Posterior vena cava (tissue), 2 donors: ENCODE measurements at regions of chrX and their contacts with region 1.

Region 1: DNA sequence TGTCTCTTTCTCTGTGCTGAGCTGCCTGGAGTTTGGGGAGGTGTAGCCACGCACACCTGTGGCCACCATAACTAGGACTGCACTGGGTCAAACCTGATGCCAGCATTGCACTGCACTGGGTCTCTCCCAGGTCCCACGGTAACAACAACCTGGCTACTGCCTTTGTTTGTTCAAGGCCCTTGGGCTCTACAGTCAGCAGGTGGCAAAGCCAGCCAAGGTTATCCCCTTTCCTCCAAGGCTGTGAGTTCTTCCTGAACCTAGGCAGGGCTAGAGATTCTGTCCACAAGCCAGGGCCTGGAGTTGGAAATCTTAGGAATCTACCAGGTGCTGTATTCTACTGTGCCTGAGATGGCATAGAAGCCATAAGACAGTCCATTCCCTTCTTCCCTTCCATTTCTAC is 126.7 kb upstream of the MAGEE2 start:
- DNase-seq: no peak

Region 2: GRCh38 chrX:74377282-74377681 is 1534.4 kb before region 1 on chrX:
- intact Hi-C with region 1: loop called in 1 of 2 experiments (anchors 5 kb)
- DNase-seq: no peak